Endothelial cell of umbilical vein (primary cell): ENCODE measurements at regions of chr13 and their contacts with region 1.

Region 1: DNA sequence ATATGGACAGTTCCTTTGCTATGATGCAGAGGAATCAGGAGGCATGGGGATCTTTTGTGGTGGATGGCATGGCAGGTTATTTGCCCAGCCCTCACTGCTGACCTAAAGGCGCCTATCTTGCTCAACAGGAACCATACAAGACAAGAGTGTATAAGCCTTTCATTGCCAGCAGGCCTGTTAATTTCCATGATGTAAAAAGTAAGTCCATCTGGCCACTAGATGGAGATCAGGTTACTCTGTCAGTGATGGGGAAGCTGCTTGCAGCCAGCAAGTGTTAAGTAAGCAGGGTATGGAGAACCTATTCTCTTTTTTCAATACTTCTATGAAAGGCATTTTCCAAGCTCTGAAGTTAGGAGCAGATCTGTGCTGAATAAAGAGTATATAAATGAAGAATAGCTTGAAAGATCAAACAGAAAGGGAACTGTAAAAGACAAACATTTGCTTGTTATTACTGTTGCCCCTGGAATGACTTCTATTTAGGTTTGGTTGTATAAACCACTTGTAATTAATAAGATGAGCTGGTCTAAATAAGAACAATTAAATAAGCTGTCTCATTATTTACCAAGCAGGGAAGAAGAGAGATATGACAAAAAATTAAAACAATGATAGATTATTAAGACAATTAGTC is 210.9 kb downstream of the RGCC start:
- DNase-seq: peak; percentile 94
- H3K4me3 ChIP-seq: no peak overlapping the region
- H3K27ac ChIP-seq: no peak overlapping the region
- H3K4me1 ChIP-seq: no peaks in the 10 kb centered on the region
- H3K27me3 ChIP-seq: no peaks in the 10 kb centered on the region
- CTCF ChIP-seq: peak; percentile 54 to 67
- POLR2A ChIP-seq: no peak

Region 2: GRCh38 chr13:41716236-41716635 is 48.0 kb after region 1 on chr13:
- CTCF ChIA-PET with region 1: interaction called, 25 read pairs
- POLR2A ChIA-PET with region 1: no interaction called
- dilution Hi-C with region 1: no loop called
- intact Hi-C with region 1: loop called (anchors 5 kb)
- DNase-seq: peak; percentile 49
- H3K4me3 ChIP-seq: no peak overlapping the region
- H3K27ac ChIP-seq: no peak overlapping the region
- H3K4me1 ChIP-seq: no peaks in the 10 kb centered on the region
- H3K27me3 ChIP-seq: no peaks in the 10 kb centered on the region
- CTCF ChIP-seq: no peak
- POLR2A ChIP-seq: no peak

Region 3: GRCh38 chr13:41916173-41916954 is 248.1 kb after region 1 on chr13:
- CTCF ChIA-PET with region 1: interaction called, 6 read pairs
- POLR2A ChIA-PET with region 1: no interaction called
- dilution Hi-C with region 1: no loop called
- intact Hi-C with region 1: loop called (anchors 10 kb)
- DNase-seq: peak; percentile 86
- H3K4me3 ChIP-seq: peak overlapping the region in 1 of 3 experiments; percentile 51
- H3K27ac ChIP-seq: peak overlapping the region; percentile 61
- H3K4me1 ChIP-seq: peaks cover 23% of the 10 kb centered on the region
- H3K27me3 ChIP-seq: no peaks in the 10 kb centered on the region
- CTCF ChIP-seq: no peak
- POLR2A ChIP-seq: no peak

Region 4: DNA sequence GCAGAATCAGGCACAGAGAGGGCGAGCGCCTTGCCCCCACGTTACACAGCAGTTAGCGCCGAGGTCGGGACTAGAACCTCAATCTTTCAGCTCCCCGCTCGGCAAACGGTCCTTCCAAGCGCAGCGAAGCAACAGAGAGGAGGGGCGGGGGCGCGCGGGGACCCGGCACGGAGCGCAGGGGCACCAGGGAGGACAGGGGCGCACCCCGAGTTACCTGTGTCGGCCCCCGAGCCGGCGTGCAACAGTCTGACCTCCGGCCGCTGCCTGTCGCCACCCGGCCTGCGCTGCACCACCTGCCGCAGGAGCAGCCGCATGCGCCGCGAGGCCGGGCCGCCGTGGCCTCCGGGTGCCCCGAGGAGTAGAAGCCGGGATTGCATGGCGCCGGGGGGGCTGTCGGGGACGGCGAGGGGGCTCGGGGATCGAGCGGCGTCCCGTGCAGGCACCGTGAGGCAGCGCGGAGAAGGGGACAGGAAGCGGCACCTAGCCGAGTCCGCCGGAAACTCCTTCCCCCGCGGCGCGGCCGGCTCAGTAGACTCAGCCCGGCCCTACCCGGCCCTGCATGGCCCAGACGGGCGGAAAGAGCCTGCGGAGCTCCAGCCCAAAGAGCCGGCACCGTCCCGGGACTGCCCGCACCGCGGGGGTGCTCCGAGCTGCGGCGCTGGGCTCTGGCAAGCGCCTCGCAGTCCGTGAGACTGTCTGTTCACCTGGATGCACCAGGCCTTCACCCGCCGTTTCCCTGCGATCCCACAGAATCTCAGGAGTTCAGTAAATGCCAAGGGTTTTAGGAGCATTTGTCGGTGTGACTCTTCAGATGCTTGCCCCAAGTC is 292.6 kb after region 1 on chr13 and contains the start of gene VWA8:
- CTCF ChIA-PET with region 1: interaction called, 25 read pairs
- POLR2A ChIA-PET with region 1: no interaction called
- dilution Hi-C with region 1: no loop called
- intact Hi-C with region 1: no loop called
- DNase-seq: peak; percentile 60
- H3K4me3 ChIP-seq: peak within 1 kb of the TSS; percentile 52 to 61 (median 54)
- H3K27ac ChIP-seq: peak within 1 kb of the TSS; percentile 2
- H3K4me1 ChIP-seq: peaks cover 8% of the 10 kb centered on the region
- H3K27me3 ChIP-seq: no peaks in the 10 kb centered on the region
- CTCF ChIP-seq: no peak
- POLR2A ChIP-seq: no peak
- total RNA-seq, gene VWA8: 11.3 and 12.7 TPM in 2 replicates

Region 5: DNA sequence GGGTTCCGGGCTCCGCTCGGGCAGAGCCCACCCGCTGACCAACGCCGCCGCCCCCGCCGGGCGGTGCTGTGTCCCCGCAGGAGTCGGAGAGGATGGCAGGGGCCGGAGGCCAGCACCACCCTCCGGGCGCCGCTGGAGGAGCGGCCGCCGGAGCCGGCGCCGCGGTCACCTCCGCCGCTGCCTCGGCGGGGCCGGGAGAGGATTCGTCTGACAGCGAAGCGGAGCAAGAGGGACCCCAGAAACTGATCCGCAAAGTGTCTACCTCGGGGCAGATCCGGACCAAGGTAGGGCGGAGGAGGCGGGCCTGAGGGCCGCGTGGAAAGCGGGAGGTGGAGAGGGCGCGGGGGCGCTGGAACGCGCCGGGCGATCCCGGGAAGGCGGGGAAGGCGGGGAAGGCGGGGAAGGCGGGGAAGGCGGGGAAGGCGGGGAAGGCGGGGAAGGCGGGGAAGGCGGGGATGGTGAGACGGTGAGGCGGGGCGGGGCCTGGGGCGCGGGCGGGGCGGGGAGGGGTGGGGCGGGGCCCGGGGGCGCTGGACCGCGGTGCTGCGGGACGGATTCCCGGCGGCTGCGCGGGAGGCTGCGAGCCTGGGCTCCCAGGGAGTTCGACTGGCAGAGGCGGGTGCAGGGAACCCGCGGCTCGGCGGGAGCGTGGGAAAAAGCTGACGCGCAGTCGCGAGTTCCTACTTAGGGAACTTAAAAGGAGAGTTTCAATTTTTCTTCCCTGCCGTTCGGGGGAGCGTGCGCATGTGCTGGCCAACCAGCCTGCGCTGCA is 380.6 kb after region 1 on chr13:
- CTCF ChIA-PET with region 1: interaction called, 25 read pairs
- POLR2A ChIA-PET with region 1: no interaction called
- dilution Hi-C with region 1: no loop called
- intact Hi-C with region 1: loop called (anchors 1 kb)
- DNase-seq: peak; percentile 71
- H3K4me3 ChIP-seq: peak overlapping the region; percentile 62 to 86 (median 79)
- H3K27ac ChIP-seq: peak overlapping the region; percentile 74
- H3K4me1 ChIP-seq: peaks cover 10% of the 10 kb centered on the region
- H3K27me3 ChIP-seq: no peaks in the 10 kb centered on the region
- CTCF ChIP-seq: peak in 1 of 2 donors; percentile 10
- POLR2A ChIP-seq: peak; percentile 44